Endothelial cell of umbilical vein (primary cell): ENCODE measurements at regions of chr7 and their contacts with region 1.

Region 1: GRCh38 chr7:139340037-139340807 is 915 bp upstream of the FMC1 start:
- DNase-seq: peak; percentile 100
- H3K4me3 ChIP-seq: peak overlapping the region; percentile 49 to 97 (median 71)
- H3K27ac ChIP-seq: peak overlapping the region; percentile 93
- H3K4me1 ChIP-seq: peaks cover 5% of the 10 kb centered on the region
- H3K27me3 ChIP-seq: no peaks in the 10 kb centered on the region
- CTCF ChIP-seq: peak; percentile 81 to 86
- POLR2A ChIP-seq: no peak

Region 2: GRCh38 chr7:138663725-138664710 is 676.2 kb before region 1 on chr7:
- CTCF ChIA-PET with region 1: no interaction called
- POLR2A ChIA-PET with region 1: no interaction called
- dilution Hi-C with region 1: no loop called
- intact Hi-C with region 1: no loop called
- DNase-seq: peak; percentile 3
- H3K4me3 ChIP-seq: peak overlapping the region in 1 of 3 experiments; percentile 7
- H3K27ac ChIP-seq: no peak overlapping the region
- H3K4me1 ChIP-seq: no peaks in the 10 kb centered on the region
- H3K27me3 ChIP-seq: peaks cover 2 to 3% of the 10 kb centered on the region in 2 experiments
- CTCF ChIP-seq: no peak
- POLR2A ChIP-seq: no peak

Region 3: DNA sequence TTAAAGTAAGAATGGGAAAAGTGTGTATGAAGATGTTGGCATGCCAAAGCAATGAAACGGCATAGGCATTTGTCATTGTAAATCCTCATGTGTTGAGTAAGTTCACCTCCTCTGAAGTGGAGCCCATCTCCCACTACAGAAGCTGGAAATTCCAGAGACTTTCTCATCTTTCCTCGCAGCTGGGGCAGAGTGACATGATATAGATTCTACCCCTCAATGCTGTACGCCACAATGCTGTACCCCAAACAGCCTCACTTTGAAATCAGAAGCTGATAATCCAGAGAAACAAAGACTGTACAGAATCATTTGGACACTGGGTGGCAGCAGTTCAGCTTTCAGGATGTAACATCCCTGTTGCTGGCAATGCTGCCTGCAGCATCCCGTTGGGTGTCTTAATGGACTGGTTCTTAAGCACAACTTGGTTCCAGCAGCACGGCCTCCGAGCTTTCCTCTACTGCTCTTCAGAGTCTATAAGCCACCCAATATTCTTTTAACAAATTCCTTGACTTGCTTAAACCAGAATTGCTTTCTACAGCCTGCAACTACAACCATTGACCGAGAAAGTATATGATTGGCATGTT is 323.2 kb before region 1 on chr7:
- CTCF ChIA-PET with region 1: interaction called, 3 read pairs
- POLR2A ChIA-PET with region 1: no interaction called
- dilution Hi-C with region 1: no loop called
- intact Hi-C with region 1: loop called (anchors 1 kb)
- DNase-seq: peak; percentile 71
- H3K4me3 ChIP-seq: no peak overlapping the region
- H3K27ac ChIP-seq: no peak overlapping the region
- H3K4me1 ChIP-seq: no peaks in the 10 kb centered on the region
- H3K27me3 ChIP-seq: no peaks in the 10 kb centered on the region
- CTCF ChIP-seq: peak; percentile 64 to 65
- POLR2A ChIP-seq: no peak

Region 4: DNA sequence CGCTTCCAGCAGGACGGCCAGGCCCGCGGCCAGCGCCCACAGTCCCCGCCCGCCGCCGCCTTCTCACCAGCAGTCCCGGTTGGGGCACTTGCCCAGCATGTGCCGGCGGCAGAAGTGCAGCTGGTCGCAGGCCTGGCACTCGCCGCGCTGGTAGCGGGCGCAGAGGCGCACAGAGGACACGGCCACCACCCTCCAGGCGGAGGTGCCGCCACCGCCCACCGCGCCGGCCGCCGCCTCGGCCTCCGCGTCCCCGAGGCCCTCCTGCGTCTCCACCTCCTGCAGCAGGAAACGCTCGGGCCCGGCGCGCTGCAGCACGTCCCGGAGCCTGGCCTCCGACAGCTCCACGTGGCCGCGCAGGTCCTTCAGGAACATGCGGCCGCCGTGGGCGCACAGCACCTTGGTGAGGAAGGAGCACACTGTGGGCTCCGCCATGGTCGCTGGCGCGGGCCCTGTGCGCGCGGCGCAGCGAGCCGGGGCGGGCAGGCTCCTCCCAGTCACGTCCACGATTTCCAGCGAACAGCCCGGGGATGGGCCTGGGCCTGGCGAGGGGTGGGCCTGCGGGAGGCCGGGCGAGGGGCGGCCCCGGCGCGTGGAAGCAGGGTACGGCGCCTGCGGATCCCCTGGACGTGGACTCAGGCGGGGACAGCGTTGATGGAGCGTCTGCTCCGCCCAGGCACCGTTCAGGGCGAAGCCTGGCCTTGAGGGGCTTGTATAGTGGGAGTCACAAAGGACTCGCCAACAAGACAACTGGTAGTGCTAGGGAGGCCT is 304.5 kb before region 1 on chr7 and contains the start of gene ZC3HAV1L:
- CTCF ChIA-PET with region 1: no interaction called
- POLR2A ChIA-PET with region 1: no interaction called
- dilution Hi-C with region 1: no loop called
- intact Hi-C with region 1: loop called (anchors 5 kb)
- DNase-seq: peak; percentile 84
- H3K4me3 ChIP-seq: peak within 1 kb of the TSS; percentile 35 to 85 (median 63)
- H3K27ac ChIP-seq: peak within 1 kb of the TSS; percentile 20
- H3K4me1 ChIP-seq: peaks cover 10% of the 10 kb centered on the region
- H3K27me3 ChIP-seq: no peaks in the 10 kb centered on the region
- CTCF ChIP-seq: no peak
- POLR2A ChIP-seq: peak; percentile 92
- total RNA-seq, gene ZC3HAV1L: 23.8 and 25.7 TPM in 2 replicates

Region 5: DNA sequence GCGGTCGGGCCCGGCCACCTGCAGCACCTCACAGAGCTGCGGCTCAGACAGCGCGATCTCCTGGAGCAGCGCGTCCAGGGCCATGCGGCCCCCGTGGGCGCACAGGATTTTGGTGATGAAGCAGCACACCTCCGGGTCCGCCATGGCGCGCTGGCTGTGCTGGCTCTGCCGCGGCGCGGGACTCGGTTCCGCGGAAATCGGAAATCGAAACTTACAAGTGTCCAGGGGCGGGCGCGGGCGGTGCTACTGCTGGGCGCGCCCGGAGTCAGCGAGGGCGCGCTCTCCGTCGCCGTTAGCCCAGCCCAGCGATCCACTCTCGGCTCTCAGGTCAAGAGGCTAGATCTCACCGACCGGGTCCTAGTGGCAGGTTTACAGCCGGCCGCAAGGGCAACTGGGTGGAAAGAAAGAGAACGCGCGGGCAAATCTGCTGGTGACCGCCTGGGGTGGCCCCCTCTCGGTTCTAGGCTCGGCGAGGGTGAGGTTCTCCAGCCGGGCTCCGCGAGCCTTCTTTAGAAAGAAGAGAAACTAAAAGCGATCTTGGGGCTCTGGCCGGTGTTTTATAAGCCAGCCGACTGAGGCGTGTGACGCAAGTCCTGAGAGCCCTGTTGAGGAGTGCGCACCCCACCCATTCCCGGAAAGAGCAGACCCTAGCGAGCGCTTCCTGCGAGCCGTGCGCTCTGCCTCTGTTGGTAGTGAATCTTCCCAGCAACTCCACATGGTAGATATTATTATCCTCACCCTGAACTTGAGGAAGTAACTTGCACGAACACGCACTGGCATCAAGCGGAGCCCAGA is 230.8 kb before region 1 on chr7 and contains the start of gene ZC3HAV1:
- CTCF ChIA-PET with region 1: interaction called, 3 read pairs
- POLR2A ChIA-PET with region 1: no interaction called
- dilution Hi-C with region 1: no loop called
- intact Hi-C with region 1: loop called (anchors 1 kb)
- DNase-seq: peak; percentile 79
- H3K4me3 ChIP-seq: peak within 1 kb of the TSS; percentile 69 to 87 (median 71)
- H3K27ac ChIP-seq: peak within 1 kb of the TSS; percentile 64
- H3K4me1 ChIP-seq: peaks cover 13% of the 10 kb centered on the region
- H3K27me3 ChIP-seq: no peaks in the 10 kb centered on the region
- CTCF ChIP-seq: no peak
- POLR2A ChIP-seq: peak; percentile 92
- total RNA-seq, gene ZC3HAV1: 36.8 and 37.7 TPM in 2 replicates

Region 6: DNA sequence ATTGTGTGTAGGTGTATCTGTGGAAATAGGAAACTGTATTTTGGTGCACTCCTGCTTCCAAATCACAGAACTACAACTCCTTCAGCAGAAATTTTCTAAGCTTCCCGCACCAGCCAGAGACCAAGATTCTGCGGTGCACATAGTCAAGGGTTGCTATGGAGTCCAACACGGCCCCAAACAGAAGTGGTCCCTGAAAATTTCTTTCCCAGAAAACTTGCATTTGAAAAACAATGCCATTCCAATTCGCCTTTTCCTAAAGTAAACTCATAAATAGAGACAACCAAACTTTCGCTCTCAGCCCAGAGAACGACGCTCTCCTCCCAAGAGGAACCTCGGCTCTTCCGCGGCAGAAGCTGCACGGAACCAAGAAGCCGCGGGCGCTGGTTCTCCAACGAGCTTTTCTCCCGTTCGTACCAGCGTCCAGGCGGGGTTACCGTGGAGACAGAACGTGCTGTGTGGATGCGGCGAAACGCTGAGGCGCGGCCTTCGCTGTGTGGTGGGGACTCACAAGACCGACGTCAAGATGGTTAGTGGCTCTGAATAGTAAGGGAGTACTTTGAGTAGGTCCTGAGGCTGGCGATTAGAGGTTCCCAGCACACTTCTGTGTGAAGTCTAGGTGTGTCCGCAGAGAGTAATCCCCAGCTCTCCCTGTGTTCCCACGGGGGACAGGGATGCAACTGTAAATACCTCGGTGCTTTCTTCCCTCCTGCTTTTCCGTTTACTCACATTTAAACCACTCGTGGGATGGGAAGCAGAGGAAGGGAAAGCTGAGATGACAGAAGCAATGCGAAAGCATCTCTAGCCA is 206.7 kb before region 1 on chr7:
- CTCF ChIA-PET with region 1: interaction called, 10 read pairs
- POLR2A ChIA-PET with region 1: interaction called, 4 read pairs
- dilution Hi-C with region 1: no loop called
- intact Hi-C with region 1: loop called (anchors 1 kb)
- DNase-seq: peak; percentile 94
- H3K4me3 ChIP-seq: peak overlapping the region; percentile 54 to 87 (median 66)
- H3K27ac ChIP-seq: peak overlapping the region; percentile 41
- H3K4me1 ChIP-seq: peaks cover 4% of the 10 kb centered on the region
- H3K27me3 ChIP-seq: peaks cover 0 to under 1% of the 10 kb centered on the region in 2 experiments
- CTCF ChIP-seq: no peak
- POLR2A ChIP-seq: peak; percentile 66

Region 7: GRCh38 chr7:139230774-139231512 is 109.3 kb before region 1 on chr7 and contains the start of gene UBN2:
- CTCF ChIA-PET with region 1: interaction called, 3 read pairs
- POLR2A ChIA-PET with region 1: no interaction called
- dilution Hi-C with region 1: no loop called
- intact Hi-C with region 1: loop called (anchors 1 kb)
- DNase-seq: peak; percentile 99
- H3K4me3 ChIP-seq: peak within 1 kb of the TSS; percentile 35 to 72 (median 67)
- H3K27ac ChIP-seq: peak within 1 kb of the TSS; percentile 67
- H3K4me1 ChIP-seq: peaks cover 16% of the 10 kb centered on the region
- H3K27me3 ChIP-seq: no peaks in the 10 kb centered on the region
- CTCF ChIP-seq: no peak
- POLR2A ChIP-seq: peak; percentile 83
- total RNA-seq, gene UBN2: 11.8 and 14.2 TPM in 2 replicates

Region 8: GRCh38 chr7:139304517-139304916 is 35.7 kb before region 1 on chr7:
- CTCF ChIA-PET with region 1: no interaction called
- POLR2A ChIA-PET with region 1: no interaction called
- dilution Hi-C with region 1: no loop called
- intact Hi-C with region 1: no loop called
- DNase-seq: no peak
- H3K4me3 ChIP-seq: no peak overlapping the region
- H3K27ac ChIP-seq: no peak overlapping the region
- H3K4me1 ChIP-seq: peaks cover 10% of the 10 kb centered on the region
- H3K27me3 ChIP-seq: no peaks in the 10 kb centered on the region
- CTCF ChIP-seq: no peak
- POLR2A ChIP-seq: no peak

Region 9: GRCh38 chr7:139359366-139360209 is 19.4 kb after region 1 on chr7 and contains the start of gene LUC7L2:
- CTCF ChIA-PET with region 1: interaction called, 15 read pairs
- POLR2A ChIA-PET with region 1: interaction called, 5 read pairs
- dilution Hi-C with region 1: no loop called
- intact Hi-C with region 1: loop called (anchors 1 kb)
- DNase-seq: peak; percentile 99
- H3K4me3 ChIP-seq: peak within 1 kb of the TSS; percentile 82 to 97 (median 95)
- H3K27ac ChIP-seq: peak within 1 kb of the TSS; percentile 98
- H3K4me1 ChIP-seq: peaks cover 21% of the 10 kb centered on the region
- H3K27me3 ChIP-seq: no peaks in the 10 kb centered on the region
- CTCF ChIP-seq: no peak
- POLR2A ChIP-seq: peak; percentile 98
- total RNA-seq, gene LUC7L2: 85.8 and 87.6 TPM in 2 replicates

Region 10: GRCh38 chr7:139725077-139725476 is 384.9 kb after region 1 on chr7:
- CTCF ChIA-PET with region 1: no interaction called
- POLR2A ChIA-PET with region 1: no interaction called
- dilution Hi-C with region 1: no loop called
- intact Hi-C with region 1: no loop called
- DNase-seq: peak; percentile 33
- H3K4me3 ChIP-seq: no peak overlapping the region
- H3K27ac ChIP-seq: no peak overlapping the region
- H3K4me1 ChIP-seq: peaks cover 41% of the 10 kb centered on the region
- H3K27me3 ChIP-seq: no peaks in the 10 kb centered on the region
- CTCF ChIP-seq: no peak
- POLR2A ChIP-seq: no peak